ENCODE measurements at regions of chr16 and their contacts with region 1.

Region 1: GRCh38 chr16:30760577-30761426 is 1.1 kb downstream of the CFAP119 start:
- DNase-seq: no peak
- H3K4me3 ChIP-seq: peak overlapping the region; percentile 82 to 93 (median 83)
- H3K27ac ChIP-seq: peak overlapping the region; percentile 89 to 96
- H3K4me1 ChIP-seq: peaks cover 3 to 19% of the 10 kb centered on the region in 2 donors
- H3K27me3 ChIP-seq: no peaks in the 10 kb centered on the region
- CTCF ChIP-seq: no peak
- POLR2A ChIP-seq: no peak

Region 2: DNA sequence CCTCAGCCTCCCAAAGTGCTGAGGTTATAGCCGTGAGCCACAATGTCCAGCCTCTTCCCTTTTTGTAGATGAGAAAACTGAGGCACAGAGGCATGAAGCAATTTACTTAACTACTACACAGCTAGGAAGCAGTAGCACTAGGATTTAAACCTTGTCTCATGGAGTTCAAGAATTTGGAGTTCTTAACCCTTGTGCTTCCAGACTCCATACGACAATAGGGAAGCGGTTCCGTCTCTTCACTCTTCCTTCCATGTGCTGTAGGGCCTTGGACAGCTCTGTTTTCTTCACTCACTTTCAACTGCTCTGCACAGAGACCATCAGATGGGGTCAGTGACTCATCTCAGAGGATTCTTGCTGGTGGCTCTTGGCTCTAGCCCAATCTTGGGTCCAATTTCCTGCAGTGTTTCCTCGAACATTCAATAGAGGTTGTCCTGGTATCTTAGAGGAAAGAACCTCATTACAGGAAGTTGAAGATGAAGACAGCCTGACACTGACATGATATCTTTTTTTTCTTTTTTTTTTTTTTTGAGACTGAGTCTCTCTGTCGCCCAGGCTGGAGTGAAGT is 269.0 kb before region 1 on chr16:
- intact Hi-C with region 1: no loop called
- DNase-seq: peak in 1 of 2 donors; percentile 67
- H3K4me3 ChIP-seq: no peak overlapping the region
- H3K27ac ChIP-seq: peak overlapping the region; percentile 48 to 61
- H3K4me1 ChIP-seq: no peaks in the 10 kb centered on the region
- H3K27me3 ChIP-seq: no peaks in the 10 kb centered on the region
- CTCF ChIP-seq: no peak
- POLR2A ChIP-seq: no peak

Region 3: DNA sequence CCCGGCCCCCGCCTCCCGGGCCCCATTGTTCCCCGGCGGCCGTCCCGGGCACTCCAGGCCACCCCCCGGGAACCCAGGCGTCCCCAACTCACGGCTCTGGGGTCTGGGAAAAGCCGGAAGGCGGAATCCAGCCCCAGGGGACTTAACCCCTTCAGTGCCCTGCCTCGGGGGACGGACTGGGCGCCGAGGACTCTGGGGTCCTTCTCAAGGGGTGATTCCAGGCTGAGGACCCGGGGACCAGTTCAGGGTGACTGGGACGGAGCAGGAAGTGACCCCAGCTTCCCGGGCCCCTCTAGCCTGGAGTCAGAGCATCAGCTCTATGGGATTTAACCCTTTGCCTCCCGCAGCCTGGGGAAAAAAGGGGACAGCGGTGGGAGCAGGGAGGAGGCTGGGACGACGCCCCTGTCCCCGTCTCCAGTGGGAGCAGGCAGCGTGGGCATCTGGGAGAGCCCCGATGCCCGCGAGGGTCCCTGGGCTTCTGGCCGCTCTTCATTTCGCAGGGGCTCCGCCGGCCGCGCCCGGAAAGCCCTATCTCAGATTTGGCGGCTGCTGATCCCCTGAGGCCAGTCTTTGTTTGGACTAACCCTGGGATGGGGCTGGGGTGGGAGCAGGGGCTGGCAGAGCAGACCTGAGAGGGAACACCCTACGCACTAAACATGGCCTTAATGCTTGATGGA is 26.3 kb after region 1 on chr16 and contains the start of gene ZNF629:
- intact Hi-C with region 1: loop called (anchors 1 kb)
- DNase-seq: peak; percentile 54 to 74
- H3K4me3 ChIP-seq: peak within 1 kb of the TSS; percentile 93 to 97 (median 96)
- H3K27ac ChIP-seq: peak within 1 kb of the TSS; percentile 91
- H3K4me1 ChIP-seq: peaks cover 0 to 6% of the 10 kb centered on the region in 2 donors
- H3K27me3 ChIP-seq: no peaks in the 10 kb centered on the region
- CTCF ChIP-seq: peak in 1 of 3 donors; percentile 25
- POLR2A ChIP-seq: no peak
- total RNA-seq, gene ZNF629: 9.4 to 16.2 (median 10.5) TPM

Measured in breast epithelium (tissue), 4 donors.